Left ventricle myocardium inferior (tissue), 1 donor: ENCODE measurements at regions of chr11 and their contacts with region 1.

Region 1: DNA sequence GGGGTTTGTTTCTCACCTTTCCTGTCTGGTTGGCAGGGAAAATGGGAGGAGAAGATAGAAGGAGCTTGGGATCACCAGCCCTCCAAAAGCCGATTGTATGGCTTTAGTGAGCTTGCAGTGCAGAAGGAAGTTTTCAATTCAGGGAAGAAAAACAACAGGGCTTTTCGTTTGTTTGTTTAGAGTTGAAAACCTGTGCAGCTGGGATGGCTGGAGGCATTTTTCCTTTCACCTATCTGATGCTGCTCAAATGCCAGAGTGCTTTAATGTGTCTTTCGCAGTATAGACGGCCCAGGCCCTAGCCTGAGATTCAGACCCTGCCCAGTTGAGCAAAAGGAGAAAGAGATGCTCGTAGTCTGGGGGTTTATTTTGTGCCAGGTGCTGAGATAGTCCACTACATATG is 87.9 kb downstream of the INSC start:
- DNase-seq: no peak
- H3K4me3 ChIP-seq: no peak overlapping the region
- H3K27ac ChIP-seq: no peak overlapping the region
- H3K4me1 ChIP-seq: peaks cover 27% of the 10 kb centered on the region
- H3K27me3 ChIP-seq: peaks cover 18% of the 10 kb centered on the region
- CTCF ChIP-seq: no peak

Region 2: DNA sequence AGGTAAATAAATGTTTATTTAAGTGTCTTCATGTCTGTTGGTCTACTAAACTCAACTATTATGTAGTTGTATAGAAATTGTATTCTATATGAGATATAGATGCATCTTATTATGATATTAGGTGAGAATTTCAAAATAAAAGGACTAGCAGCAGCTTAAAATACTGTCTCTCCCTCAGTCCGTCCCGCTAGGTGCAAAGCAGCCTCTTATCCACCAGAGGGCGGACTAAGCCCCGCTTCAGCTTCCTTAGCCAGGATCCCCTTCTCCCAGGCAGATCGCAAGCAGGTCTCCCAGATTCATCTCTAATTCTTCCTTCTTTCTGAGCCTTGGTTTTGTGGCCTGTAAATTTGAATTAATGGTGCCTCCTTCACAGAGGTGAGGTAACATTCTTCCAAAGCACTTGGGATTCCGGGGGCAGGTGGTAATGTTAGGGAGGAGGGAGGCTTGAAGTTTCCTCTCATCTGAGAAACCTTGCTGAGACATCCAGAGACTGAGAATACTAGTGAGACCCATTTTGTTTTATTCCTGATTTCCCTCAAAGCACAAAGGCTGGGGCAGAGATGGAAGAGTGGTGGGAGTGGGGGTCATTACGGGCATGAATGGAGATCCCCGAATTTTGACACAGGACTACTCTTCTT is 101.4 kb before region 1 on chr11:
- intact Hi-C with region 1: loop called (anchors 2 kb)
- DNase-seq: peak; percentile 34
- H3K4me3 ChIP-seq: no peak overlapping the region
- H3K27ac ChIP-seq: no peak overlapping the region
- H3K4me1 ChIP-seq: no peaks in the 10 kb centered on the region
- H3K27me3 ChIP-seq: peaks cover 44% of the 10 kb centered on the region
- CTCF ChIP-seq: peak; percentile 93